ENCODE measurements at regions of chr1 and their contacts with region 1.

Region 1: GRCh38 chr1:153946622-153947241 is at the start of gene DENND4B:
- DNase-seq: peak; percentile 78
- ATAC-seq: peak; percentile 73
- H3K4me3 Mint-ChIP-seq: peak within 1 kb of the TSS; percentile 88
- H3K27ac Mint-ChIP-seq: peak within 1 kb of the TSS; percentile 99
- H3K4me1 Mint-ChIP-seq: peaks cover 26% of the 10 kb centered on the region
- H3K27me3 Mint-ChIP-seq: no peaks in the 10 kb centered on the region
- CTCF ChIP-seq: peak; percentile 99
- total RNA-seq, gene DENND4B: 102 to 107 TPM

Region 2: DNA sequence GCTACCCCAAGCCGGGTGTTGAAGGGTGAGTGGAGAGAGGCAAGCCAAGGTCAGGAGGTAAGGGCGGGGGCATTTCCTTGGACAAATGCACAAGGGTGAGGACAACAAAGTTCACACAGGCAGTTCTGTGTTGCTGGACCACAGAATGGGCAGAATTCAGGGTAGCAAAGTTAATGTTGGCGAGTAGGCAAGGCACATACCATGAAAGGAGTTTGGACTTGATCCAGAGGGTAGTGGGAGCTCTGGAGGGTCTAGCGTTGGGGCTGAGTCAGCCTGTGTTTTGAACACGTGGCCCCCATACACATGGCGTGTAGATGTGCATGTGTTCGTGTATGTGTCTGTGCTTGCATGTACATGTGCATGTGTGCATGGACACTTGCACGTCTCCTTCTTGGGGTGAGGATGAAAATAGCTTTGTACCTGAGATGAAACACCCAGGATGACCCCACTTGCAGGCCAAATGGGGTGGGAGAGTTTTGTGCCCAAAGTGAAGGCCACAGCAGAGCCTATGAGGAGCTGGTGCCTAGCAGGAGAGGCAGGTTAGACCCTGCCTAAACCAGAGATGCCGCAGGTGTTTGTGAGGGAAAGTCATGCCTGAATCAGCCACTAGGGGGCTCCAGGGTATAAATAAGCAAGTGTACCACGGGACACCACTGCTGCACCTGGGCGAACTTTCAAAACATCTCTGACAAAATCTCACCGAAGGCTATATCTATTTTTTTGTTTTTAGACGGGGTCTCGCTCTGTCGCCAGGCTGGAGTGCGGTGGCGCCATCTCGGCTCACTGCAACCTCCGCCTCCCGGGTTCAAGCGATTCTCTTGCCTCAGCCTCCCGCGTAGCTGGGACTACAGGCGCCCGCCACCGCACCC is 149.7 kb before region 1 on chr1:
- CTCF ChIA-PET with region 1: interaction called, 29 read pairs
- POLR2A ChIA-PET with region 1: interaction called, 5 read pairs
- intact Hi-C with region 1: no loop called
- DNase-seq: peak; percentile 97
- ATAC-seq: peak; percentile 90
- H3K4me3 Mint-ChIP-seq: no peak overlapping the region
- H3K27ac Mint-ChIP-seq: no peak overlapping the region
- H3K4me1 Mint-ChIP-seq: peaks cover 11% of the 10 kb centered on the region
- H3K27me3 Mint-ChIP-seq: no peaks in the 10 kb centered on the region
- CTCF ChIP-seq: peak; percentile 83

Region 3: GRCh38 chr1:153928791-153929341 is 17.9 kb before region 1 on chr1:
- CTCF ChIA-PET with region 1: interaction called, 46 read pairs
- POLR2A ChIA-PET with region 1: interaction called, 126 read pairs
- intact Hi-C with region 1: no loop called
- DNase-seq: no peak
- ATAC-seq: no peak
- H3K4me3 Mint-ChIP-seq: no peak overlapping the region
- H3K27ac Mint-ChIP-seq: peak overlapping the region; percentile 74
- H3K4me1 Mint-ChIP-seq: peaks cover 14% of the 10 kb centered on the region
- H3K27me3 Mint-ChIP-seq: no peaks in the 10 kb centered on the region
- CTCF ChIP-seq: no peak

Region 4: GRCh38 chr1:153934746-153935145 is 12.0 kb before region 1 on chr1:
- CTCF ChIA-PET with region 1: interaction called, 10 read pairs
- POLR2A ChIA-PET with region 1: interaction called, 13 read pairs
- intact Hi-C with region 1: no loop called
- DNase-seq: no peak
- ATAC-seq: no peak
- H3K4me3 Mint-ChIP-seq: no peak overlapping the region
- H3K27ac Mint-ChIP-seq: no peak overlapping the region
- H3K4me1 Mint-ChIP-seq: peaks cover under 1% of the 10 kb centered on the region
- H3K27me3 Mint-ChIP-seq: no peaks in the 10 kb centered on the region
- CTCF ChIP-seq: no peak

Region 5: GRCh38 chr1:153958111-153958960 is 11.6 kb after region 1 on chr1 and contains the start of gene CRTC2:
- CTCF ChIA-PET with region 1: interaction called, 46 read pairs
- POLR2A ChIA-PET with region 1: interaction called, 62 read pairs
- intact Hi-C with region 1: no loop called
- DNase-seq: peak; percentile 100
- ATAC-seq: peak; percentile 88
- H3K4me3 Mint-ChIP-seq: peak within 1 kb of the TSS; percentile 97
- H3K27ac Mint-ChIP-seq: peak within 1 kb of the TSS; percentile 98
- H3K4me1 Mint-ChIP-seq: peaks cover 59% of the 10 kb centered on the region
- H3K27me3 Mint-ChIP-seq: no peaks in the 10 kb centered on the region
- CTCF ChIP-seq: no peak
- total RNA-seq, gene CRTC2: 67.3 to 71.8 TPM

Region 6: GRCh38 chr1:153967082-153968000 is 20.6 kb after region 1 on chr1 and contains the start of gene CREB3L4:
- CTCF ChIA-PET with region 1: interaction called, 37 read pairs
- POLR2A ChIA-PET with region 1: interaction called, 14 read pairs
- intact Hi-C with region 1: no loop called
- DNase-seq: peak; percentile 94
- ATAC-seq: peak; percentile 88
- H3K4me3 Mint-ChIP-seq: peak within 1 kb of the TSS; percentile 99
- H3K27ac Mint-ChIP-seq: peak within 1 kb of the TSS; percentile 94
- H3K4me1 Mint-ChIP-seq: peaks cover 32% of the 10 kb centered on the region
- H3K27me3 Mint-ChIP-seq: no peaks in the 10 kb centered on the region
- CTCF ChIP-seq: peak; percentile 18
- total RNA-seq, gene CREB3L4: 8.3 to 8.8 TPM

Region 7: DNA sequence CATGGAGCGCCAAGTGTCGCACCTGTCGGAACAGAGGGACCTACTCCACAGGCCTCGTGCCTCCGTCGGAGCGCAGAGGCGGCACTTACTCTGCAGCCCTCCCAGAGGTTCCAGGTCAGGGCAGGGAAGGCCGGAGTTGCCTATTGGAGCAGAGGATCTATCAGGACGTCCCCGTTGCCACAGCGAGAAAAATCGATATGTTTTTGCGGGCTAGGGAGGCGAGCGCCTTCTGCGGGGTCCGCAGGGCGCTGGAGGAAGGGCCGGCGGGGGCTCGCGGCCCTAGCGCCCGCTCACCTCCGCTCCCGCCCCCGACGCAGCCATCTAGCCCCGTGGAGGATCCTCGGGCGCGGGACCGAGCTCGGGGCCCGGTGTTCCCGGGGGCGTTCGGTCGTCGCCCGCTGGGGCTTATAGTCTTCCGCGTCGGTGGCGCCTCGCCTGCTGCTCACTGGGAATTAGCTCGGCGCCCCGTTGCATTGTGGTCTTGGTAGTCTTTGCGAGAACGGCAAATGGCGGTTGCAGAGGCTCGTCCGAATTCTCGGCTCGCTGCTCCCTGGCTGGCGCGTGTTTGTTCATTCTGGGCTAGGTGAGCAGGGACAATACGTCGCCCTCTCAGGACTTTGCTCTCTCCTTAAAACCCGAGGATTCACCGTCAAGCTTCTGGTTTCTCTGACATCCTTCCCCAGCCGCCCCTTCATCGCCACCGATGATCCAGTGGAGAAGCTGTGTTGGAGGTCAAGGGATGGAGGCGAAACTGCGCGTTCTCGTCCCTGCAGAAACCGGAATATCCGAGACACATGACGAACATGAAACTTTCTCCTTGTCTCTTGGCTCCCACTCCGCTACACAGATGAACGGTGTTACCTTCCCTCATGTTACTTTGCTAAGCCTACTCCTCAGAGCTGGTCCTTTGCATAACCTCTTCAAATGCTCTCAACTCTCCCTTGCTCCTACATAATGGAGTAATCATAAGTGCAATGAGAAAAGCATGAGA is 30.8 kb after region 1 on chr1 and contains the start of gene JTB:
- CTCF ChIA-PET with region 1: interaction called, 7 read pairs
- POLR2A ChIA-PET with region 1: interaction called, 14 read pairs
- intact Hi-C with region 1: no loop called
- DNase-seq: peak; percentile 94
- ATAC-seq: peak; percentile 96
- H3K4me3 Mint-ChIP-seq: peak within 1 kb of the TSS; percentile 99
- H3K27ac Mint-ChIP-seq: peak within 1 kb of the TSS; percentile 98
- H3K4me1 Mint-ChIP-seq: peaks cover 28% of the 10 kb centered on the region
- H3K27me3 Mint-ChIP-seq: no peaks in the 10 kb centered on the region
- CTCF ChIP-seq: no peak
- total RNA-seq, gene JTB: 151 to 153 TPM